GM12878 (cell line): ENCODE measurements at regions of chr5 and their contacts with region 1.

Region 1: GRCh38 chr5:80093796-80094195 is 58.6 kb downstream of the THBS4 start:
- DNase-seq: no peak
- ATAC-seq: no peak
- H3K4me3 ChIP-seq: no peak overlapping the region
- H3K27ac ChIP-seq: no peak overlapping the region
- H3K4me1 ChIP-seq: no peaks in the 10 kb centered on the region
- H3K27me3 ChIP-seq: no peaks in the 10 kb centered on the region
- CTCF ChIP-seq: no peak
- EP300 ChIP-seq: no peak
- POLR2A ChIP-seq: no peak
- RAD21 ChIP-seq: no peak

Region 2: DNA sequence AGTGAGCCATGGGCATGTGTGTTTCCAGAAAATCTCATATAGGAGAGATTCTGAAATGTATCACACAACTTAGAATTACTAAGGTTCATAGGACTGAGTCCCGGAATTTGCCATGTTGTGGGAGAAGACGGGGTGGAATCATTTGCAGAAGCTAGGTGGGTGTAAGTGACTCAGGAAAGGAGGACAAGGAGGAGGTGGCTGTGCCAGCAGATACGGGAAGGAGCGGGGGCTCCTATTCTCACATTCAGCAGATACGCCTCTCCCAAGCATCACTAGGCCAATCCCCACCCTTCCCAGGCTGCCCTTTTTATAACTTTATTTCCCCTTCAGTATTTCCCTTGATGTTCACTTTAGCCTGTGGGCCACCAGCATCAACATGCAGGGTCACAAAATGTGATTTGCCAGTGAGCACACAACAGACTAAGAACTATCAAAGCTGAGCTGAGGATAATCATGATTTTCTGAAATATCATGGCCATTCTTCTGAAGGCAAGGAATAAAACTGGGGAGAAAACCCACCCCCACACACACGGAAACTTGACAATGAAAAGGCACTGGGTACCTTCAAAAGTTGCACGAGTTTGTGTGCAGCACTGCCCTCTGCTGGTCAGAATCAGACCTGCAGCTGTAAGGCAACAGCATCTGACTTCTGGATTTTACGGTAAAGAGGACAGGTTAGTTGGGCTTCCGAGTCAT is 235.9 kb before region 1 on chr5:
- CTCF ChIA-PET with region 1: no interaction called
- POLR2A ChIA-PET with region 1: no interaction called
- RAD21 ChIA-PET with region 1: no interaction called
- SMC1A ChIA-PET with region 1: no interaction called
- in situ Hi-C with region 1: no loop called
- intact Hi-C with region 1: no loop called
- DNase-seq: peak; percentile 23
- ATAC-seq: peak; percentile 79
- H3K4me3 ChIP-seq: no peak overlapping the region
- H3K27ac ChIP-seq: no peak overlapping the region
- H3K4me1 ChIP-seq: no peaks in the 10 kb centered on the region
- H3K27me3 ChIP-seq: peaks cover 0 to 2% of the 10 kb centered on the region in 2 experiments; a peak in 1 of 4 replicates
- CTCF ChIP-seq: peak; percentile 87 to 98 (median 97)
- EP300 ChIP-seq: no peak
- POLR2A ChIP-seq: no peak
- RAD21 ChIP-seq: peak; percentile 89

Region 3: DNA sequence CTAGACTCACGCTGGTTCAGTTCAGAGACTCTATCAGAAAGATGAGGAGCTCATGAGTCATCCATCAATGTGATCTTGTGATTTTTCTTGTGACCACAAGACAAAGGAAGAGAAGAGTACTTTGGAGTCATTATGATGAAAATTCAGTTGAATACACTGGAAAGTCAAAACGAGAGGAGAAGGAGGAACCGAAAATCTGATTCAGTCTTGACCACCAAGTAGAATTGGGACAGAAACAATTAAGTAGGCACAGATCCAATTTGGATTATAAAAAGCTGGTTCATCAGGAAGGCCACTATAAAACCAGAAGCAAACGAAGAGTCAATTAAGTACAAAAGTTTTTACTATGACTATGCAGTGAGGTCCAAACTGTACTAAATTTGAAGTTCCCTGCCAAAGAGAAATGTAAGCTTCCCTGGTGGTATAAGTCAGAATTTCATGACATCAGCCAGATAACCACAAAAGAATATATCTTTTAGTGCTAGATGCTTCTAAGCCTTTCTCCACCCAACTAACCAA is 32.2 kb after region 1 on chr5:
- CTCF ChIA-PET with region 1: interaction called, 24 read pairs
- POLR2A ChIA-PET with region 1: interaction called, 3 read pairs
- RAD21 ChIA-PET with region 1: interaction called, 13 read pairs
- SMC1A ChIA-PET with region 1: interaction called, 11 read pairs
- in situ Hi-C with region 1: no loop called
- intact Hi-C with region 1: loop called (anchors 5 kb)
- DNase-seq: peak; percentile 93
- ATAC-seq: peak; percentile 81
- H3K4me3 ChIP-seq: peak overlapping the region; percentile 32; the same call in 1 of the 2 replicates
- H3K27ac ChIP-seq: peak overlapping the region; percentile 74
- H3K4me1 ChIP-seq: peaks cover 28% of the 10 kb centered on the region
- H3K27me3 ChIP-seq: no peaks in the 10 kb centered on the region
- CTCF ChIP-seq: no peak; a peak in 1 of 6 replicates
- EP300 ChIP-seq: peak; percentile 97 to 99; a peak in 3 of 4 replicates
- POLR2A ChIP-seq: no peak
- RAD21 ChIP-seq: no peak

Region 4: DNA sequence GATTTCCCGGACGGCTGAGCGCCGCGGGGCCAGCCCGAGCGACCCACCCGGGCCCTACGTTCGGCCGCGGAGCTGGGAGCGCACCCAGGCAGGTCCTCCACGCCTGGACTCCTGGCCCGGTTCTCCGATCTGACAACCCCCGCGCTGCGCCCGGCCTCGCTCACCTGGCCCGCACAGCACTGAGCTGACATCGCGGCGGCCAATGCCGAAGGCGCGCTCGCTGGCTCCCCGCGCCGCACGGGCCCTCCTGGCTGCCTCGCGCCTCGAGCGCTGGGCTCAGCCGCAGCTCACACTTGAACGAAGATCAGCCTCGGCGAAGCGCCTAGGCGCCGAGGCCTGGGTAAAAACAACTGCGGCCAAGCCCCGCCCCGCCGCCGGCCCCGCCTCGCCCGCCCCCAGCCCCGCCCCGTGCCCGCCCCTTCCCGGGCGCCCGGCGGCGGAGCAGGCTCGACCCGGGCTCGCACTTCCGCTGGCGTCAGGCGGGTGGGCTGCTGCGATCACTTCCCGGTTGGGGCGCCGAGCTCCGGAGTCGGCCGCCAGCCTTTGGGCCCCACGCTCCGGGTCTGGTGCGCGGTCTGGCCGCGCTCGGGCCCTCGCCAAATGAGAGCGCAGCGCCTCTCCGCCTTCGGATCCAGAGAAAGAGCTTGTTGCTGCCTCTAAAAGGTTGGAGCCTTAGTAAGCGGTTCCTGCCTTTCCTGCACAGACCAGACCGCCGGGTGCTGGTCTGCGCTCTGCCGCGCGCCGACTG is 162.1 kb after region 1 on chr5 and contains the start of gene SERINC5:
- CTCF ChIA-PET with region 1: interaction called, 6 read pairs
- POLR2A ChIA-PET with region 1: interaction called, 3 read pairs
- RAD21 ChIA-PET with region 1: interaction called, 13 read pairs
- SMC1A ChIA-PET with region 1: interaction called, 5 read pairs
- in situ Hi-C with region 1: no loop called
- intact Hi-C with region 1: loop called (anchors 5 kb)
- DNase-seq: no peak
- ATAC-seq: peak; percentile 82
- H3K4me3 ChIP-seq: peak within 1 kb of the TSS; percentile 98
- H3K27ac ChIP-seq: peak within 1 kb of the TSS; percentile 94
- H3K4me1 ChIP-seq: peaks cover 8% of the 10 kb centered on the region
- H3K27me3 ChIP-seq: no peaks in the 10 kb centered on the region
- CTCF ChIP-seq: no peak
- EP300 ChIP-seq: 0 out of 4 replicates have a peak, but pooled peaks of 1 of the 2 experiments have one; percentile 20
- POLR2A ChIP-seq: peak; percentile 97
- RAD21 ChIP-seq: no peak
- polyA plus RNA-seq, gene SERINC5: 0.66 to 1.9 TPM

Region 5: DNA sequence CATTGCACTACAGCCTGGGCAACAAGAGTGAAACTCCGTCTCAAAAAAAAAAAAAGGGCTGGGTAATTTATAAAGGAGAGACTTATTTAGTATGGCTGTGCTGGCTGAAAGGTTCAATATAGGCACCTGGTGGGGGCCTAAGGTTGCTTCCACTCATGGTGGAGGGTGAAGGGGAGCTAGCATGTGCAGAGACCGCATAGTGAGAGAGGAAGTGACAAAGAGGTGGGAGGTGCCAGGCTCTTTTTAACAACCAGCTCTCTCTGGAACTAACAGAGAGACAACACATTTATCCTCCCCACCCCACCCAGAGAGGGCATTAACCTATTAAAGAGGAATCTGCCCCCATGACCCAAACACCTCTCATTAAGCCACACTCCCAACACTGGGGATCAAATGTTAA is 190.9 kb after region 1 on chr5:
- CTCF ChIA-PET with region 1: interaction called, 12 read pairs
- POLR2A ChIA-PET with region 1: interaction called, 3 read pairs
- RAD21 ChIA-PET with region 1: interaction called, 6 read pairs
- SMC1A ChIA-PET with region 1: interaction called, 89 read pairs
- in situ Hi-C with region 1: no loop called
- intact Hi-C with region 1: no loop called
- DNase-seq: no peak
- ATAC-seq: peak; percentile 74
- H3K4me3 ChIP-seq: no peak overlapping the region
- H3K27ac ChIP-seq: no peak overlapping the region
- H3K4me1 ChIP-seq: no peaks in the 10 kb centered on the region
- H3K27me3 ChIP-seq: no peaks in the 10 kb centered on the region
- CTCF ChIP-seq: no peak
- EP300 ChIP-seq: no peak
- POLR2A ChIP-seq: no peak
- RAD21 ChIP-seq: no peak

Region 6: GRCh38 chr5:80318212-80318611 is 224.4 kb after region 1 on chr5:
- CTCF ChIA-PET with region 1: interaction called, 10 read pairs
- POLR2A ChIA-PET with region 1: no interaction called
- RAD21 ChIA-PET with region 1: no interaction called
- SMC1A ChIA-PET with region 1: interaction called, 4 read pairs
- in situ Hi-C with region 1: no loop called
- intact Hi-C with region 1: no loop called
- DNase-seq: no peak
- ATAC-seq: no peak
- H3K4me3 ChIP-seq: no peak overlapping the region
- H3K27ac ChIP-seq: no peak overlapping the region
- H3K4me1 ChIP-seq: no peaks in the 10 kb centered on the region
- H3K27me3 ChIP-seq: no peaks in the 10 kb centered on the region; a peak in 1 of 4 replicates
- CTCF ChIP-seq: no peak
- EP300 ChIP-seq: no peak
- POLR2A ChIP-seq: no peak
- RAD21 ChIP-seq: no peak